A549 (cell line): ENCODE measurements at regions of chr16 and their contacts with region 1.

Region 1: DNA sequence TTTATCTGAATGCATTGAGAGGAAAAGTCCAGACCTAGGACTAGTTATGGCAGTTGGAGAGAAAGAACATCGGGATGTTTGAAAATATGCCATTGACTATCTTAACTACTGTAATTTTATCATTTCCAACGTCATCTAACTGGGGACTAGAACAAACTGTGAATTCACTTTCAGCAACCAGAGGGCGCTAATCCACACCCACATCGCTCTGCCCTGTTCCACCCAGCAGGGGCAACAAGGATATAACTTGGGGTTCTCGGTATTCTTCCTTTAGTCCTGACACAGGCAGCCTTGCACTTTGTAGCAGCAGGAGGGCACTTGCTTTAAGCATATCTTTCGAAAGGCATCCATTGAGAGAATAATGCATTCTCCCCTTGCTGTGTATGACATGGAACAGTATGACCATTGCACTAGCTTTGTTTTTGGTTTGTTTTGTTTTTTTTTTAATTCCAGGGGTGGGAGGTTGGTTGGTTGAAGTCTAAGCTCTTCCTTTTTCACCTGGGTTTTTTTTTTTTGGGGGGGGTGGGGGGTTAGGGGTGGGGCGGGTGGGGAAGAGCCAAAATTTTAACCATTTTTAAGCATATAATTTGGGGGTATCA is 31.5 kb downstream of the SIAH1 start:
- DNase-seq: peak; percentile 78 to 81
- ATAC-seq: peak; percentile 88 to 94
- H3K4me3 ChIP-seq: no peak overlapping the region
- H3K27ac ChIP-seq: no peak overlapping the region; a peak in 1 of 6 replicates
- H3K4me1 ChIP-seq: peaks cover 3% of the 10 kb centered on the region; the same call in 1 of the 3 replicates
- CTCF ChIP-seq: peak; percentile 89
- EP300 ChIP-seq: no peak
- POLR2A ChIP-seq: no peak
- RAD21 ChIP-seq: peak; percentile 79 to 82

Region 2: GRCh38 chr16:48365581-48366164 is 12.0 kb after region 1 on chr16:
- CTCF ChIA-PET with region 1: interaction called, 17 read pairs
- POLR2A ChIA-PET with region 1: interaction called, 15 read pairs
- DNase-seq: peak; percentile 71 to 93
- ATAC-seq: peak; percentile 95 to 99
- H3K4me3 ChIP-seq: peak overlapping the region; percentile 53
- H3K27ac ChIP-seq: peak overlapping the region; percentile 90 to 92
- H3K4me1 ChIP-seq: peaks cover 46% of the 10 kb centered on the region
- CTCF ChIP-seq: no peak
- EP300 ChIP-seq: no peak
- POLR2A ChIP-seq: peak; percentile 80
- RAD21 ChIP-seq: peak in 1 of 2 experiments; percentile 9; a peak in 1 of 5 replicates

Region 3: GRCh38 chr16:48526058-48526957 is 172.6 kb after region 1 on chr16:
- CTCF ChIA-PET with region 1: interaction called, 26 read pairs
- POLR2A ChIA-PET with region 1: no interaction called
- DNase-seq: peak; percentile 44 to 69
- ATAC-seq: peak; percentile 84 to 89
- H3K4me3 ChIP-seq: no peak overlapping the region
- H3K27ac ChIP-seq: peak overlapping the region; percentile 27 to 31; a peak in 2 of 6 replicates
- H3K4me1 ChIP-seq: peaks cover 12% of the 10 kb centered on the region
- CTCF ChIP-seq: peak; percentile 60
- EP300 ChIP-seq: no peak
- POLR2A ChIP-seq: no peak
- RAD21 ChIP-seq: peak; percentile 84 to 89

Region 4: GRCh38 chr16:48535831-48536613 is 182.4 kb after region 1 on chr16:
- CTCF ChIA-PET with region 1: interaction called, 27 read pairs
- POLR2A ChIA-PET with region 1: interaction called, 8 read pairs
- DNase-seq: no peak
- ATAC-seq: no peak; a peak in 1 of 6 replicates
- H3K4me3 ChIP-seq: no peak overlapping the region
- H3K27ac ChIP-seq: no peak overlapping the region
- H3K4me1 ChIP-seq: no peaks in the 10 kb centered on the region
- CTCF ChIP-seq: no peak
- EP300 ChIP-seq: no peak
- POLR2A ChIP-seq: no peak
- RAD21 ChIP-seq: no peak

Region 5: GRCh38 chr16:48542020-48542473 is 188.4 kb after region 1 on chr16:
- CTCF ChIA-PET with region 1: interaction called, 27 read pairs
- POLR2A ChIA-PET with region 1: no interaction called
- DNase-seq: peak; percentile 56 to 66
- ATAC-seq: peak; percentile 85 to 89
- H3K4me3 ChIP-seq: no peak overlapping the region
- H3K27ac ChIP-seq: peak overlapping the region in 1 of 2 experiments; percentile 30; a peak in 2 of 6 replicates
- H3K4me1 ChIP-seq: 0 out of 3 replicates have a peak, but pooled peaks cover 5% of the 10 kb centered on the region
- CTCF ChIP-seq: peak; percentile 75
- EP300 ChIP-seq: no peak
- POLR2A ChIP-seq: no peak
- RAD21 ChIP-seq: peak; percentile 89

Region 6: GRCh38 chr16:48561960-48562393 is 208.3 kb after region 1 on chr16:
- CTCF ChIA-PET with region 1: no interaction called
- POLR2A ChIA-PET with region 1: no interaction called
- DNase-seq: no peak
- ATAC-seq: no peak
- H3K4me3 ChIP-seq: no peak overlapping the region
- H3K27ac ChIP-seq: no peak overlapping the region
- H3K4me1 ChIP-seq: peaks cover 6% of the 10 kb centered on the region
- CTCF ChIP-seq: no peak
- EP300 ChIP-seq: no peak
- POLR2A ChIP-seq: no peak
- RAD21 ChIP-seq: no peak